GM23248 (cell line): ENCODE measurements at regions of chr15 and their contacts with region 1.

Region 1: DNA sequence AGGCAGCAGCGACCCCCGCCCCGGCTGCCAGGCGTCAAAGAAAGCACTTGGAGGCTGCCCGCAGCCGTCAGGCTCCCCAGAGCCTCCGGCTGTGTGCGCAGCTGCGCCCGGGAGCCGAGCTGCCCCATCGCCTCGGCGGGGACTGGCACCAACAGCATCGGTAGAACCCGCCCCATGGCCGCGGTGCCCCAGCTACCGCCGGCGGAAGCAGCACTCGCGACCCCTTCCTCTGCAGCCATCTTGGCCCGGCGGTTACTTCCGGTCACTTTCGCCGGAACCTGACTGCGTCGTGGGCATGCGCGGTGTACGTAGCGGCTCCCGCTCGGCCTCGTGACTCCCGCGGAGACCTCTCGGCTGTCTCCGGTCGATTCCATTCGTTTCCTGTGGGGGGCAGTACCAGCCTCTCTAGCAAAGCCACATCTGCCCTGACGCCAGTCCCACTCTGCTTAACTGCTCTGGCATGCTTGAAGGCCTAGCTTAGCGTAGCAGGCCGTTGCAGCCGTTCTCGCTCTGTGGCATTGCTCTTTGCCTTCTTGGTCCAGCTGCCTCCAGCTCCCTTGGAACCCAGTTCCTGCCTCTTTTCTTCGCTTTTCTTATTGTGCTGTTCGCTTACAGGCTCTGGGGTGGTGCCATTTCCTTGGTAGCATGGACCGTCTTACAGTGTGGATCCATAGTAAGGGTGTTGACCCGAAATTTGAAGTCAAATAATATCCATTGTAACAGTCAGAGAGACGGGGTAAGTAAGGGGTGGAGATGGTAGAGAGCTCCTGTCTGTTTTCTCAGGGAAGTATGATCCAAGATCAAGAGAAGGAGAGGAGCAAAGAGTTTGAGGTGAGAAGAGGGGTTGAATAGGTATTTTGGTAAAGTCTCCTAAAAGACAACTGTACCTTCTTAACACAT is at the start of gene SPG11:
- DNase-seq: peak; percentile 99
- H3K4me3 ChIP-seq: peak within 1 kb of the TSS; percentile 100
- H3K27ac ChIP-seq: peak within 1 kb of the TSS; percentile 80
- H3K4me1 ChIP-seq: peaks cover 10% of the 10 kb centered on the region
- H3K27me3 ChIP-seq: no peaks in the 10 kb centered on the region
- total RNA-seq, gene SPG11: 53.6 and 75.6 TPM in 2 replicates

Region 2: GRCh38 chr15:44593042-44593736 is 70.5 kb before region 1 on chr15:
- in situ Hi-C with region 1: no loop called
- DNase-seq: peak; percentile 49
- H3K4me3 ChIP-seq: no peak overlapping the region
- H3K27ac ChIP-seq: no peak overlapping the region
- H3K4me1 ChIP-seq: no peaks in the 10 kb centered on the region
- H3K27me3 ChIP-seq: no peaks in the 10 kb centered on the region

Region 3: GRCh38 chr15:44738340-44738984 is 74.8 kb after region 1 on chr15:
- in situ Hi-C with region 1: loop called (anchors 10 kb)
- DNase-seq: peak; percentile 60
- H3K4me3 ChIP-seq: no peak overlapping the region
- H3K27ac ChIP-seq: no peak overlapping the region
- H3K4me1 ChIP-seq: no peaks in the 10 kb centered on the region
- H3K27me3 ChIP-seq: no peaks in the 10 kb centered on the region